BJ (cell line): ENCODE measurements at regions of chr6 and their contacts with region 1.

Region 1: GRCh38 chr6:73329201-73329600 is 24.9 kb downstream of the DPPA5 start:
- DNase-seq: no peak
- H3K4me3 ChIP-seq: no peak overlapping the region
- H3K27me3 ChIP-seq: peaks cover 1% of the 10 kb centered on the region; the same call in 1 of the 2 replicates
- CTCF ChIP-seq: no peak

Region 2: GRCh38 chr6:73285674-73286283 is 43.4 kb before region 1 on chr6:
- CTCF ChIA-PET with region 1: interaction called, 107 read pairs
- POLR2A ChIA-PET with region 1: no interaction called
- DNase-seq: no peak
- H3K4me3 ChIP-seq: no peak overlapping the region
- H3K27me3 ChIP-seq: no peaks in the 10 kb centered on the region
- CTCF ChIP-seq: peak; percentile 54

Region 3: DNA sequence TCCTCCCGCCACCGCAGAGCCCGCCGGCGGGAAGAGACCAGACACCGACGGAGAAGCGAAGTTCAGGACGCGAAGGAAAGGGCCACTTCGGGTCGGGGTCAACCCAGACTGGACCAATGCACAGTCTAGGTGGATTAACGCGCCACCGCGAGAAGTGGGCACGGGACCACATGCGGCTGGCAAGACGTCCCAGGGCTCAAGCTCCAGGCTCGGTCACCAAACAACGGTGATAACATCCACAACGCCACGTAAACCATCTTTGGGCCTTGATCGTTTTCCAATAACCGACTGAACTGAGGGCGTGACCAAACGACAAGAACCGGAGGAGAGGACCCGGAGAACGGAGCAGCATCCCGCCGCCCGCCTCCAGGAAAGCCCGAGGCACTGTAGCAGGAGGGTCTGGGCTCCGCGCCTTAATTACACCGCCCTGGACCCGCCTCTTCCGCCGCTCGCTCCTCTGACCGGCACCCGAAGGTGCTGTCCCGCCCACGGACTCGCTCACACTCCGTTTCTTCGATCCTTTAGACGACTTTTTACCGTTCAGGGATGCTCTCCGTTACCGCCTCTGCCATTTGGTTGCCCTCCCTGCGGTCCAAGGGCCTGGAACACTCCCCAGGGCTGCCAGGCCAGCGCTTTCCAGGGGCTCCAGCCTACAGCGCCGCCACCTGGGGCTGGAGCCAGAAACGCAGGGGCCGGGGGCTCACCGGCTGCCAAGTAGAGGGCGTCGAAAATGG is 19.3 kb before region 1 on chr6:
- CTCF ChIA-PET with region 1: interaction called, 27 read pairs
- POLR2A ChIA-PET with region 1: no interaction called
- DNase-seq: no peak
- H3K4me3 ChIP-seq: peak overlapping the region; percentile 64
- H3K27me3 ChIP-seq: no peaks in the 10 kb centered on the region; the same call in 1 of the 2 replicates
- CTCF ChIP-seq: peak; percentile 77

Region 4: DNA sequence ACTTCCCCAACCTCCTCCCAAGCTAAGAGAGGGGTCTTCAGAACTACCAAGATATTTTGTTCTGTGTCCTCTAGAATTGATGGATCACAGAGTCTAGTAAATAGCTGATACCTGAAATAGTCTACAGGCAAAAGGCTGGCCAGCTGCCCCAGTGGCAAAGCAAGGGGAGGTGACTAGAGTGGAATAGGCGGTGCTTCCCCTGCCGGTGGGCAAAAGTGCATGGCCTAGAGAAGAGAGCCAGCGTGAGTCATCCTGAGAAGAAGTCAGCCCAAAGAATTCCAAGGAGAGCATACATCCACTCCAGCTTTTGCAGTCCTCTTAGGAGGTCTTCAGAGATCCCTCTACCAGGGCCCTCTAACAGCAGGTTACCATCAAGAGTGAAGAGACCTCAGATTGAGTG is 10.1 kb after region 1 on chr6:
- CTCF ChIA-PET with region 1: interaction called, 13 read pairs
- POLR2A ChIA-PET with region 1: no interaction called
- DNase-seq: no peak
- H3K4me3 ChIP-seq: no peak overlapping the region
- H3K27me3 ChIP-seq: peaks cover 1% of the 10 kb centered on the region; the same call in 1 of the 2 replicates
- CTCF ChIP-seq: no peak